ENCODE measurements at regions of chr11 and their contacts with region 1.

Region 1: DNA sequence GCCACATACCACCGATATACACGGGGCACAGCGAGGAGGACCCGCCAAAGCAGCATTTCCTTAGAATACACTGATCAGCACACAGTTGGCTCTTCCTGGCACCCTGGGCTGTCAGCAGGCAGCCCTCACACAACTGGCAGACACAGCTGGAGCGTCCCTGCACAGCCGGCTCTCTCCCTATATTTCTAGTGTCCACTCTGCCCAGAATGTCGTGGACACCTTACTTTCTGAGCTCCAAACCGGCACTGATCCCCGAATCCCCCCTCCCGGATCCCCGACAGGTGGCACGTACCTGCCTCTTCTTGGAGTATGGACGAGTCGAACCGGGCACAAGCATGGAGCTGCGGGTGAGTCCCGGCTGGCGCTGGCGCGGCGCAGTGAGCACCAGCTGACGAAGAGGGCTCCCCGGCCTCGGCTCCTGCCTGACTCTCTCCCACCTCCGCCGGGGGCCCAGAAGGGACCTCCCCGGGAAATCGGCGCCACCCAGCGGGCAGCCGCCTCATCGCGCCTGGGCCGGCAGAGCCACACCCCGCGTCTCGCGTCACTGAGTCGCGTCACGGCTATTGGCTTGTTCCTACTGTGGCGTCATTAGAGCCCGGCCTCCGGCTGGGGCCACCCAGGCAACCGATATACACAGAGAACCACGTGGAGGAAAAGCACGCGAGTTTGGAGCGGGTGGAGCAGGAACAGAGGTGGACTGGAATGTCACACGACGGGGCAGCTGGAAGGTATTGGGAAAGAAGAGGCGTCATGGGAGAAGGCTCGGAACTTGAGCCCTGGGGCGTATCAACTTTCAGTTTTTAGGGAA is at the start of gene USP2:
- DNase-seq: peak; percentile 97
- ATAC-seq: peak; percentile 95
- total RNA-seq, gene USP2: 140 TPM

Region 2: DNA sequence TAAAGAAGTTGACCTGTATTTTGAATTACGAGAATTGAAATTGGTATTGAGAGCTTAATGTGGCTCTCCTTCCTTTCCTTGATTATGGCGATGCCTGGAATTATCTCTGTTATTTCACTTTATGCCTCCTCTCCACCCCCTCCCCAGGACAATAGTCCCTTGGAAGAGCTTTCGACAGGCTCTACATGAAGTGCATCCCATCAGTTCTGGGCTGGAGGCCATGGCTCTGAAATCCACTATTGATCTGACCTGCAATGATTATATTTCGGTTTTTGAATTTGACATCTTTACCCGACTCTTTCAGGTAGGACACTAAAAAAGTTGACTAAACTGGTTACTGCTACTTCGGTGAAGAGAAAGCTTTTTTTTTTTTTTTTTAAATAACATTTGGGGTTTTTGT is 107.7 kb before region 1 on chr11:
- intact Hi-C with region 1: no loop called
- DNase-seq: no peak
- ATAC-seq: no peak

Region 3: DNA sequence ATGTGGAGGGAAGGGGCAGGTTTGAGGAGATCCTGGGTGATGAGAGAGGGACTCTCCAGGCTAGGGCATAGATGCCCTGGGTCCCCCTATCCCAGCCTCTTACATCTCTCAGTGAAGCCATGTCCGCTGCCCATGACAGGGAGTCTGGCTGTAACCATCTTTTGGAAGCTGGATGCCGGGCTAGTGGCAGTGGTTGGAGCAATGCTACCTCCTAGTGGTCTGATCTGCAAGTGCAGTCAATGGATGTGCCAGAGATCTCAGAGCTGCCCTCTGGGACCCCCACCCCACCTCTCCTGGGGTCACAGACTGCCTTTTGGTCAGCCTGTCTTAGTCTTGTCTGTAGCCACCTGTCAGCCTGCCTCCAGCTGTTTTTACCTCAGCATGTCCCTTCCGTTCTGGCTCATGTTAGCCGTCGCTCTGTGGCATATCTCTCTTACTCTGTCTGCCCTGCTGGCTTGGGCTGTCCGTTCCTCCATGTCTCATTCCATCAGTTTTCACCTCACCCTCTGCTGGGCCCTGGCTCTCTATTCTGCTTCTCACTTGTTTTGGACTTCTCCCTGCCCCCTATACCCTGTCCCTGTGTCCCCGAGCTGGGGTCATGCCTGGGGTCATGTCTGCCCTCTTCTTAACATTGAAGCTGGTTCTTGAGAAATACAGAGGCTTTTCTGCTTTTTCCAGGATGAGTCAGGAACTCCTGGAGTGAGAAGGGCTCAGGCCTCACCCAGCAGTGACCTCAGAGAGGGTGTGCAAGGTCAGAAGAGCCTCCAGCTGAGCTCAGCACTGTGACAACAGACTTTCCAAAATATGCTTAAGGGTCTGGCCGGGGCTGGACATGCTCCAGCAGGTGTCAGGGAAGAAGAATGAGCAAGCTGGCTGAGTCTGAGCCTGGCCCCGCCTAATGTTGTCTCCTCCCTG is 93.6 kb after region 1 on chr11:
- intact Hi-C with region 1: loop called (anchors 10 kb)
- DNase-seq: no peak
- ATAC-seq: peak; percentile 57

Region 4: DNA sequence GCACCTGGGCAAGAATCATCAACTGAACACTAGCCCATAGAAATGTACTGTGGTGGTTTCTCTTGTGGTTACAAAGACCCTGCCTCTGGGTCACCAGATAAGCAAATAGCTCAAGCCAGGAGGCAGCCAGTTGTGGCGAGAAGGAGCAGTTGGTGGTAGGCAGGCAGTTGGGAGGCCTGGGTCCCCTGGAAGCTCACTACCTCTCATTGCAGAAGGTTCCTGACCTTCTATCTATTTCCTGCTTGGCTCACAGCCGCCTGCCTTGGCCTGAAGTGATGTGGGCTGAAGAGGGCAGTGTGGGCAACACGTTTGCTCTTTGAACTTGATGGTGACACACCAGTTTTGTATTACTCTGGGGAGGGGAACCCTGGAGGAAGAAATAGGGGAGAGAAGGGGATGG is 312.9 kb after region 1 on chr11:
- intact Hi-C with region 1: no loop called
- DNase-seq: no peak
- ATAC-seq: no peak